GM12878 (cell line): ENCODE measurements at regions of chr19 and their contacts with region 1.

Region 1: DNA sequence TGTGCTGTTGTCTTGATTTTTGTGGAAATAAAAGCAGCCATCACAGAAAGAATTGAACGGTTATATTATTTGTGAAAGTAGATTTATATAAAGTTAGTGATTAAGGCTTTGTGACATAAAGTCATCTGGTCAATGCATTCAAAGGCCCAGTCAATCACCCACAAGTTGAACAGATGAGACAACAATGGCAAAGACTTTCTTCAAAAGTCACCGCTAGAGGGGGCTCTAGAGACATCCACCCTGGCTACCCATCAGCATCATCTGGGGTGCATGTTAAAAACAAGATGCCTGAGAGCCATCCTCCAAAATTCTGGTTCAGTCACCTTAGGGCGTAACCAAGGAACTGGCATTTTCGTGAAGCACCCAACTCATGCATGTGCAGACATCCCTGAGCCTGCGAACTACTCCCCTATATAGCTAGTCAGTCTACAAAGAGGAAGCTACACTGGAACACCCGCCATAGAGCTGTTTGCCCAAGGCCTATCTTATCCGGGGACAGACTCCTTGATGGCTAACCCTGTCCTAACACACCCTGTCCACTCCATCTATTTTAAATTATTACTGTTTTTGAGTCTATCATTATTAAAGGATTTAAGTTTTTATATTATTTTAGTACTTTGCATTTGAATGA is 970.5 kb downstream of the UQCRFS1 start:
- DNase-seq: no peak
- ATAC-seq: no peak
- H3K4me3 ChIP-seq: no peak overlapping the region
- H3K27ac ChIP-seq: no peak overlapping the region
- H3K4me1 ChIP-seq: no peaks in the 10 kb centered on the region
- H3K27me3 ChIP-seq: no peaks in the 10 kb centered on the region
- CTCF ChIP-seq: peak; percentile 13 to 34 (median 23); a peak in 4 of 6 replicates
- EP300 ChIP-seq: no peak
- POLR2A ChIP-seq: no peak
- RAD21 ChIP-seq: peak; percentile 38

Region 2: GRCh38 chr19:28221736-28222135 is 20.7 kb before region 1 on chr19:
- CTCF ChIA-PET with region 1: interaction called, 8 read pairs
- POLR2A ChIA-PET with region 1: no interaction called
- RAD21 ChIA-PET with region 1: interaction called, 14 read pairs
- SMC1A ChIA-PET with region 1: interaction called, 4 read pairs
- in situ Hi-C with region 1: no loop called
- intact Hi-C with region 1: no loop called
- DNase-seq: no peak
- ATAC-seq: no peak
- H3K4me3 ChIP-seq: no peak overlapping the region
- H3K27ac ChIP-seq: no peak overlapping the region
- H3K4me1 ChIP-seq: no peaks in the 10 kb centered on the region
- H3K27me3 ChIP-seq: no peaks in the 10 kb centered on the region
- CTCF ChIP-seq: no peak
- EP300 ChIP-seq: no peak
- POLR2A ChIP-seq: no peak
- RAD21 ChIP-seq: no peak

Region 3: DNA sequence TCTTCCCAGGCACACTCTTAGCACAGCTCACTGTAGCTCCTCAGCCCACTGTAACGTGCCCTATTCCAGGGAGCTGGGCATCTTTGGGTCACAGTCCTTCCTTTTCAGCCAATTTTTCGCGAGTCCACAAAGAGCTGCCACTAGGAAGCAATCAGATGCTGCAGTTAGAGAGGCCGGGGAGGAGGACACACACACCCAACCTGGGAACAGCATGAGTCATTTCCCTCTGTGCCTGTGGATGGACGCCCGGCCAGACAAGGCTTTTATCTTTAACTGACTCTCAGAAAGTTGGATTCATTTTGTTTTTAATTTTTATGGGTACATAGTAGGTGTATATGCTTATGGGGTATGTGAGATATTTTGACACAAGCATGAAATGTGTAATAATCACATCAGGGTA is 52.0 kb after region 1 on chr19:
- CTCF ChIA-PET with region 1: no interaction called
- POLR2A ChIA-PET with region 1: no interaction called
- RAD21 ChIA-PET with region 1: no interaction called
- SMC1A ChIA-PET with region 1: no interaction called
- in situ Hi-C with region 1: no loop called
- intact Hi-C with region 1: no loop called
- DNase-seq: no peak
- ATAC-seq: no peak
- H3K4me3 ChIP-seq: no peak overlapping the region
- H3K27ac ChIP-seq: no peak overlapping the region
- H3K4me1 ChIP-seq: no peaks in the 10 kb centered on the region
- H3K27me3 ChIP-seq: no peaks in the 10 kb centered on the region
- CTCF ChIP-seq: no peak
- EP300 ChIP-seq: no peak
- POLR2A ChIP-seq: no peak
- RAD21 ChIP-seq: no peak

Region 4: GRCh38 chr19:28324275-28325060 is 82.1 kb after region 1 on chr19:
- CTCF ChIA-PET with region 1: interaction called, 37 read pairs
- POLR2A ChIA-PET with region 1: no interaction called
- RAD21 ChIA-PET with region 1: interaction called, 6 read pairs
- SMC1A ChIA-PET with region 1: interaction called, 7 read pairs
- in situ Hi-C with region 1: no loop called
- intact Hi-C with region 1: no loop called
- DNase-seq: no peak
- ATAC-seq: no peak
- H3K4me3 ChIP-seq: no peak overlapping the region
- H3K27ac ChIP-seq: no peak overlapping the region
- H3K4me1 ChIP-seq: no peaks in the 10 kb centered on the region
- H3K27me3 ChIP-seq: no peaks in the 10 kb centered on the region
- CTCF ChIP-seq: no peak
- EP300 ChIP-seq: no peak
- POLR2A ChIP-seq: no peak
- RAD21 ChIP-seq: no peak